ENCODE measurements at regions of chr2 and their contacts with region 1.

Region 1: DNA sequence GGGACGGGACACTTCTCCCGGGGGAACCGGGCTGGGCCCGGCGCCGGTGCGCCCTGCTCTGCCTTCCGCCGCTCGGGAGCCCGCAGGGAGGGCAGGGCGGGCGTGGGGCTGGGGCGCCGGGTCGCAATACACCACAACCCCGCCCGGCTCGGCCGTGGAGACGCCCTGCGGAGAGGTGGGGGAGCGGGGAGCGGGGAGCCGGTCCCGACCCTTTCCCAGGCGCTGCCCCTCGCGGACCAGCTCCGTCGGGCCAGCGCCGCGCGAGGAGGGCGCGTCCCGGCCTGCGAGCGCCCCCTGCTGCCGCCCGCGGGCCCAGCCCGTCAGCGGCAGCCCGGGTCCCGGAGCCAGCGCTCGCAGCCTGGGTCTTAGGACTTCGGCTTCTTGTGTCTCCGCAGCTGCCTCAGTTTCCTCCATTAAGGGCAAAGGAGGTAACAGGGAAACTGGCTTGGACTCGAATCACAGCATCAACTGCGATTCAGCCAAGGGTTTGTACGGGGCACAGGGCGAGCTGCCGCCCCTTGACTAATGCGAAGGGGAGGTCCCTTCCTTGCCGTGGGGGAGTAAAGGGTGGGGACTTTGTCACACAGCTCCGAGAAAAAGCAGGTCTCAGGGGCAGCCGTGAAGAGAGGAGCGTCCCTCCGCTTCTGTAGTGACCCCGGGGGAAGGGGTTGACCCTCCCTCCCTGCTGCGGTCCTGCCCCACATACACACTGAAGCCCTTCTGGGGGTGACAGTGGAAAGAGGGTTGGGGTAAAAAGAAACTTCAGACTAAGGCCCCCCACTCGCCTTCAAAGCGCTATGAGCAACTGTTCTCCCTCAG is 717 bp upstream of the ADRA2B start:
- DNase-seq: peak; percentile 97
- H3K4me3 ChIP-seq: peak overlapping the region; percentile 44 to 54; a peak in 3 of 4 replicates
- H3K27ac ChIP-seq: no peak overlapping the region
- H3K4me1 ChIP-seq: peaks cover 0 to 12% of the 10 kb centered on the region in 2 experiments; a peak in 1 of 4 replicates
- H3K27me3 ChIP-seq: no peaks in the 10 kb centered on the region; the same call in 1 of the 2 replicates
- CTCF ChIP-seq: peak; percentile 71
- EP300 ChIP-seq: no peak
- RAD21 ChIP-seq: peak; percentile 74

Region 2: DNA sequence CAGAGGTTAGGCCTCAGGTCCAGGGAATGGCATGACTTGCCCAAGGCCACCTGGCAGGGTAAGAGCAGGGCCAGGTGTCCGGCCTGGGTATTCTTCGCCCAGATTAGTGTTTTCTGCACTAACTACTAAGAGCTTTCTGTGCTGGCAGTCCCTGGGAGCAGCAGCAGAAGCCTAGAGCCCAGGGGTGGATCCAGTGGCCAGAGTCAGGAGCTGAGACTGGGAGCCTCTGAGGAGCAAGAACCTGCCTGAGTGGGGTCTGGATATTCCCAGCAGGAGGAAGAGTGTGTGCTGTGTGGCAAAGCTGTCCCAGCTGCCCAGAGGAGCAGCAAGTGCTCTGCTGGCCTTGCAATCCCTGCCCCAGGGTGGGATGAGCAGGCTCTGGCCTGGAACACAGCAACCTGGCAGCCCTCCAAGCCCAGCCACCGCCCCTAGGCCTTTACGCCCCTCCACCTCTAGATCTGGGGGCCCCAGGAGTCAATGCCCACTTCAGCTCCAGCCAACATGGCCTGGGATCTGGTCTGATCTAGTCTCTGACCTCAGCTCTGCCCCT is 51.6 kb before region 1 on chr2:
- CTCF ChIA-PET with region 1: interaction called, 10 read pairs
- POLR2A ChIA-PET with region 1: no interaction called
- DNase-seq: peak; percentile 48
- H3K4me3 ChIP-seq: no peak overlapping the region
- H3K27ac ChIP-seq: no peak overlapping the region; a peak in 1 of 4 replicates
- H3K4me1 ChIP-seq: peaks cover 0 to 8% of the 10 kb centered on the region in 2 experiments; a peak in 1 of 4 replicates
- H3K27me3 ChIP-seq: no peaks in the 10 kb centered on the region
- CTCF ChIP-seq: no peak
- EP300 ChIP-seq: no peak
- RAD21 ChIP-seq: no peak

Region 3: DNA sequence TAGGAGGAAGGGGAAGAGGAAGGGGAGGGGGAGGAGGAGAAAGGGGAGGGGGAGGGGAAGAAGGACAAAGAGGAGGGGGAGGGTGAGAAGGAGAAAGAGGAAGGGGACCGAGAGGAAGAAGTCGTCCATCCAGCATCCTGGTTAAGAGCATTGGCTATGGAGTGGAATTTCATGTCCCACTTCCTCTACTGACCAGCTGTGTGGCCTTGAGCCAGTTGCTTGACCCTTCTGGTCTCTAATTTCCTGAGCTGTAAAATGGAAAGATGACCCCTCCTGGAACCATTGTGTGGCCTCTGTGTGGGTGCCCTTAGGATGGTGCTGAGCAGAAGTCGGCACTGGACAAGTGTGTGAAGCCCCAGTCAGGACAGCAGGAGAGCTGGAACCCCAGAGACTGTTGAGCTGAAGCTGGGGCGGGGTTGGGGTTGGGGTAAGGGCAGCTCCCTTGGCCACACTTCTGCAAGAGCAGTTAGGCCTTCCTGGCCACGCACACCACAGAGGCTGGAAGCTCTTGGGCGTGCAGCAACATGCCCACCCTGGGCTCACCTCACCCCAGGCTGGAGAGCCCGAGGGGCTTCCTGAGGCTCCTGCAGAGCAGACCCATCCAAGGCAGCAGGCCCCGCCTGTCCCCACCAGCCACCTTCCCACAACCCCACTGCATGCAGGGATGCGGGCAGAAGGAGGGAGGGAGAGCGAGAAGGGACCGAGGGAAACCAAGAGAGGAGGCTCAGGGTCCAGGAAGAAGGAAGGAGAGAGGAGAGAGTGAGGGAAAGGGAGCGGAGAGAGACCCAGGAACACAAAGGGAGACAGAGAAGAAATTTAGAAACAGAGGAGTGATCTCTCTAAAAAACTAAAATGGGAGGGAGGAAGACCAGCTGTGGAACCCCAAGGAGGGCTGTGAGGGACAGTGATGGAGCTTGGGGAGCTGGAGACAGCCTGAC is 17.0 kb before region 1 on chr2:
- CTCF ChIA-PET with region 1: interaction called, 15 read pairs
- POLR2A ChIA-PET with region 1: no interaction called
- DNase-seq: peak; percentile 23
- H3K4me3 ChIP-seq: no peak overlapping the region
- H3K27ac ChIP-seq: no peak overlapping the region
- H3K4me1 ChIP-seq: peaks cover 0 to 3% of the 10 kb centered on the region in 2 experiments; a peak in 1 of 4 replicates
- H3K27me3 ChIP-seq: no peaks in the 10 kb centered on the region
- CTCF ChIP-seq: no peak
- EP300 ChIP-seq: no peak
- RAD21 ChIP-seq: no peak

Region 4: GRCh38 chr2:96138179-96139145 is 21.4 kb after region 1 on chr2 and contains the start of gene ASTL:
- CTCF ChIA-PET with region 1: interaction called, 44 read pairs
- POLR2A ChIA-PET with region 1: no interaction called
- DNase-seq: peak; percentile 73
- H3K4me3 ChIP-seq: no peak within 1 kb of the TSS; a peak in 1 of 4 replicates
- H3K27ac ChIP-seq: no peak within 1 kb of the TSS
- H3K4me1 ChIP-seq: peaks cover 0 to 22% of the 10 kb centered on the region in 2 experiments; a peak in 1 of 4 replicates
- H3K27me3 ChIP-seq: peaks cover 7% of the 10 kb centered on the region; the same call in 1 of the 2 replicates
- CTCF ChIP-seq: peak; percentile 53
- EP300 ChIP-seq: no peak
- RAD21 ChIP-seq: peak; percentile 71
- polyA plus RNA-seq, gene ASTL: not detected in 2 replicates

Region 5: DNA sequence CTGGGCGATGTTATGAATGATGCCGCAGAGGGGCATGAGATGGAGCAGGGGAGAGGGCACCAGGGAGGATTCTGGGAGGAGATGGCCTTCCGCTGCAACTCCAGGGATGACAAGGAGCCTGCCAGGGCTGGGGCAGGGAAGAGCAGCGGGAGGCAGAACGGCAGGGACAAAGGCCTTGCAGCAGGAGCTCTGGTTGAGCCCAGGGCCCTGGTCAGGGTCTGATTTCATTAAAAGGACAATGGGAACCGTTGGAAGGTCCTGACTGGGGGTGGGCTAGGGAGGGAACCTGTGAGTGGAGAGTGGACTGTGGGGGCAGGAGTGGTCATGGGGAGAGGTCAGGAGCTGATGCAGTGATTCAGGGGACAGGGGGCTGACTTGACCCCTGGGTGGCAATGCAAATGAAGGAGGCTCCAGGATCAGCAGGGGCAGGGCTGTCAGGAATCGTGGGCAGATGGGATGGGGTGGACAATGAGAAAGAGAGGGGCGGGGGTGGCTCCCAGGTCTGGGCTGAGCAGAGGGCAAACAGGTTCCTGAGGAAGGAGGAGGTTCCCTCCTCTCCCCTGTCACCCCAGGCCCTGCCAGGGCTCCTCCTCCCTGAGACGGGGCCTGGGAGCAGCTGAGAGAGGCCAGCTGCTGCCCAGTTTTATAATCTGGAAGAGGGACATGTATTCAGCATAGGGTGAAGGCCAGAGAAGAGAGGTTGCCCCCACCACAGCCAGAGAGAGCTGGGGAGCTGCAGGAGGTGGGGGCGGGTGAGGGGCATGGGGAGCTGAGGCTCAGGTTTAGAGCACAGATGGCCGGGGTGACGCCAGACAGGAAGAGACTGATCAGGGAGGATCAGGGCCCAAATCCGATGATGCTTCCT is 35.4 kb after region 1 on chr2:
- CTCF ChIA-PET with region 1: interaction called, 27 read pairs
- POLR2A ChIA-PET with region 1: no interaction called
- DNase-seq: peak; percentile 45
- H3K4me3 ChIP-seq: no peak overlapping the region
- H3K27ac ChIP-seq: 0 out of 4 replicates have a peak overlapping the region, but pooled peaks of 1 of the 2 experiments have one; percentile 24
- H3K4me1 ChIP-seq: peaks cover 15 to 27% of the 10 kb centered on the region in 2 experiments
- H3K27me3 ChIP-seq: no peaks in the 10 kb centered on the region
- CTCF ChIP-seq: no peak
- EP300 ChIP-seq: no peak
- RAD21 ChIP-seq: no peak